Thyroid gland (tissue), 4 donors: ENCODE measurements at regions of chr19 and their contacts with region 1.

Region 1: DNA sequence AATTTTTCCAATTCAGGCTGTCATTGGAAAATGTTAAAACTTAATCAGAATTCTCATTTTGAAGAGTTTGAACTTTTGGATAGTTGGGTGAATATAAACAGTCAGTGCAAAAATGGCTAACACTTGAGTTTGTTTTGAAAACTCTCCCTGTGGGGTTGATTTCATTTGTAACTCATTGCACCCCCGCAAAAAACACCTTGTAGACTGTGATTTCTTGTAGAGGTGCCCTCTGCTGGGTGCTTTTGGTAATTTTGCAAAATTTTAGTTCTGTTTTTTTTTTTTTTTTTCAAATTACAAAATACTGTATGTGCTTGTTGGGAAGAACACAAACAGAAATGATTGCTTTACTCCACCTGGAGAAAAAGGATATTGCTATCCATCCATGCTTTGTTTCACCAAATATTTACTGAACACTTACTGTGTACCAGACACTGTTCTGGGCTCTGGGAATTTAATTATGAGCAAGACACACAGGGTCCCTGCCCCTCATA is 28.2 kb upstream of the GPI start:
- DNase-seq: peak in 1 of 2 donors; percentile 38
- H3K4me3 ChIP-seq: no peak overlapping the region
- H3K27ac ChIP-seq: peak overlapping the region; percentile 43 to 66 (median 54)
- H3K4me1 ChIP-seq: peaks cover 0 to 25% of the 10 kb centered on the region in 2 donors
- H3K27me3 ChIP-seq: no peaks in the 10 kb centered on the region
- CTCF ChIP-seq: peak; percentile 41 to 76 (median 50)
- POLR2A ChIP-seq: no peak

Region 2: DNA sequence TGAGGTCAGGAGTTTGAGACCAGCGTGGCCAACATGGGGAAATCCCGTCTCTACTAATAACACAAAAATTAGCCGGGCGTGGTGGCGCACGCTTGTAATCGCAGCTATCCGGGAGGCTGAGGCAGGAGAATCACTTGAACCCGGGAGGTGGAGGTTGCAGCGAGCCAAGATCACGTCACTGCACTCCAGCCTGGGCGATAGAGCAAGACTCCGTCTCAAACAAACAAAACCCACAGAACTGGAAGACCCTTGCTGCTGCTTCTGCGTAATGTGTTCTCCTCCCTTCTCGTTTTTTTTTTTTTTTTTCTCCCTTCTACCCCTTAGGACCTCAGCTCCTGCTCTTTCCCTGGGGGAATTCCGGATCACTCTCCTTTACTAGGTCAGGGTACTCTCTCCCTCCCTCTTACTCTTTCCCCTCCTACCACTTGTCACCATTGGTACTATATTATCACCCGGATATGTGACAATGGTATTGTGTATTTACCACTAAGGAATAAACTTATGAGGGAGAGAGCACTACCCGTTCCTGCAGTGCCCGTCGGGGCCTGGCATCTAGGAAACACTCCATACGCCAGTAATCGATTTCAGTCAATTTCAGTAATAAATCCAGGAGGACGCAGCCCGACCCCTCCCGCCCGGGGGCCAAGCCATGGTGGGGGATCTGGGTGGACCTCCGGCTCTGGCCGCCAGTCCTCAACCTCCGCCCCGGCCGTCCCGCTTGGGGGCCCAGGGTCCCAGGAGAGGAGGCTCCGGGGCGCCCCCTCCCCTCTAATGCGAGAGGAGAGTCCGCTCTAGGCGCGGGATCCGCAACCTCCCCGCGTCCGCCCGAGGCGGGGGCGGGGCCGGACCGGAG is 82.9 kb before region 1 on chr19:
- intact Hi-C with region 1: loop called (anchors 10 kb)
- DNase-seq: peak; percentile 28 to 34
- H3K4me3 ChIP-seq: peak overlapping the region; percentile 51 to 98 (median 87)
- H3K27ac ChIP-seq: peak overlapping the region; percentile 93 to 98 (median 96)
- H3K4me1 ChIP-seq: peaks cover 5 to 21% of the 10 kb centered on the region in 2 donors
- H3K27me3 ChIP-seq: no peaks in the 10 kb centered on the region
- CTCF ChIP-seq: no peak
- POLR2A ChIP-seq: peak in 1 of 2 donors; percentile 89